MCF 10A (cell line): ENCODE measurements at regions of chr19 and their contacts with region 1.

Region 1: GRCh38 chr19:49301165-49301865 is 23.7 kb downstream of the SLC6A16 start:
- DNase-seq: peak; percentile 80
- H3K4me3 Mint-ChIP-seq: no peak overlapping the region
- H3K27ac Mint-ChIP-seq: no peak overlapping the region
- H3K4me1 Mint-ChIP-seq: no peaks in the 10 kb centered on the region
- H3K27me3 Mint-ChIP-seq: peaks cover 26% of the 10 kb centered on the region
- CTCF ChIP-seq: peak; percentile 87

Region 2: GRCh38 chr19:49264258-49264657 is 37.1 kb before region 1 on chr19:
- CTCF ChIA-PET with region 1: interaction called, 14 read pairs
- POLR2A ChIA-PET with region 1: no interaction called
- intact Hi-C with region 1: loop called (anchors 1 kb)
- DNase-seq: no peak
- H3K4me3 Mint-ChIP-seq: no peak overlapping the region
- H3K27ac Mint-ChIP-seq: no peak overlapping the region
- H3K4me1 Mint-ChIP-seq: no peaks in the 10 kb centered on the region
- H3K27me3 Mint-ChIP-seq: no peaks in the 10 kb centered on the region
- CTCF ChIP-seq: no peak

Region 3: GRCh38 chr19:49282184-49282583 is 19.1 kb before region 1 on chr19:
- CTCF ChIA-PET with region 1: interaction called, 10 read pairs
- POLR2A ChIA-PET with region 1: interaction called, 4 read pairs
- intact Hi-C with region 1: no loop called
- DNase-seq: no peak
- H3K4me3 Mint-ChIP-seq: no peak overlapping the region
- H3K27ac Mint-ChIP-seq: no peak overlapping the region
- H3K4me1 Mint-ChIP-seq: no peaks in the 10 kb centered on the region
- H3K27me3 Mint-ChIP-seq: no peaks in the 10 kb centered on the region
- CTCF ChIP-seq: no peak